IMR-90 (cell line): ENCODE measurements at regions of chr1 and their contacts with region 1.

Region 1: DNA sequence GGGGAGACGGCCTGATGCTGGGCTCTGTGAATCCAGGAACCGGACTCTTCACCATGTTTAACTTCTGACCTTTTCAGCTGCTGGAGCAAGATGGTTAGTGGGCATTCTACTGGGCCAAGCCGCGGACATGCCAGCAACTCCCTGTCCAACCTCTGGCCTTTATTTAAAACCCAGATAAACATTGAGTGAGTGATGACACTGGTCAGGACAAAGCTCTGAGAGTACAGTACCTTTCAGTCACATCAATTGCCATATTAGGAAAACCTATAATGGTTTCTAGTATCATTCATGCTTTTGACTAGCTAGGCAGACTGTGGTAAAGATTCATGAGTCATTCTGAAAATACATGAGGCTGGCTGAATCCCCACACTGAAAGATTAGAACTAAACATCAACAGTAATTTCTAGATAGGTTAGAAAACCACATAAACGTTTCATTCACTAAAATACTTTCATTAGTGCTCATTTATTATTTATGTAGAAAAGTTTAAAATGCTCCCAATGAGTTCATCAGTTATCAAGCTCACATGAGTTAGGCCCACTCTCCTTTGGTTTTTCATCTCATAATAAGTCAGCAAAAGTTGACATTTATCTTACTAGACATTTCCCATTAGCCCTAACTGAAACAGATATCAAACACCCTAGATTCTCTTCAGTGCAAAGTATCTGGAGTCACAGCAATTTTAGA is 7.1 kb upstream of the ACTA1 start:
- DNase-seq: peak; percentile 90
- ATAC-seq: peak; percentile 90
- H3K4me3 ChIP-seq: no peak overlapping the region
- H3K27ac ChIP-seq: peak overlapping the region; percentile 74
- H3K4me1 ChIP-seq: peaks cover 10% of the 10 kb centered on the region
- H3K27me3 ChIP-seq: no peaks in the 10 kb centered on the region; the same call in 1 of the 2 replicates
- CTCF ChIP-seq: 0 out of 2 replicates have a peak, but pooled peaks have one; percentile 1
- POLR2A ChIP-seq: no peak
- RAD21 ChIP-seq: no peak

Region 2: DNA sequence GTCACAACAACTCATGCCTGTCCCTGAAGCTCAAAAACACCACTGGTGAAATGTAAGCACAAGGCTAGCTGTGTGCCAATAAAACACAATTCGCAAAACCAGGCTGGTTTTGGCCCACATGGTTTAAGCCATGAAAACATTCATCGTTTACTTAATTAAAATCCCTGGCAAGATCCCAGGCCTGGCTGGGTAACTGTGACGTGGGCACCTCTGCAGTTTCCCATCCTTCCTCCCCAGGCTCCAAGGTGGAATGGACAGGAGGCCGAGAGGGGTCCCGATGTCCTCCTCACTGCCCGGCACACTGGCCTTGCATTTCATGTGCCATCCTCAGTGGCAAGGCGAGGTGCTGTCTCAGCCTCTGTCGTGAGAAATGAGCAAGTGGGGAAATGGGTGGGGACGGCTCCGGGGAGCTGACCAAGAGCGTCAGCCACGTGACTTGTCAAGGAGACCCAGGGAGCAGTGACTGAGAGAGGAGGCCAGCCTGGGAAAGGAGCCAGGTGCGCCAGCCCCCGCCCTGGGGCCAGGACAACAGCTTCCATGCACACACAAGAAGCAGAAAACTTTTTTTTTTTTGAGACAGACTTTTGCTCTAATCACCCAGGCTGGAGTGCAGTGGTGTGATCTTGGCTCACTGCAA is 323.2 kb before region 1 on chr1:
- CTCF ChIA-PET with region 1: no interaction called
- POLR2A ChIA-PET with region 1: no interaction called
- dilution Hi-C with region 1: no loop called
- in situ Hi-C with region 1: no loop called
- intact Hi-C with region 1: loop called (anchors 10 kb)
- DNase-seq: peak; percentile 49
- ATAC-seq: peak; percentile 24
- H3K4me3 ChIP-seq: no peak overlapping the region
- H3K27ac ChIP-seq: peak overlapping the region; percentile 1; the same call in 1 of the 2 replicates
- H3K4me1 ChIP-seq: peaks cover 16% of the 10 kb centered on the region; the same call in 1 of the 2 replicates
- H3K27me3 ChIP-seq: peaks cover 17% of the 10 kb centered on the region
- CTCF ChIP-seq: no peak
- POLR2A ChIP-seq: no peak
- RAD21 ChIP-seq: no peak

Region 3: GRCh38 chr1:229270547-229271447 is 170.2 kb before region 1 on chr1 and contains the start of gene RAB4A:
- CTCF ChIA-PET with region 1: no interaction called
- POLR2A ChIA-PET with region 1: no interaction called
- dilution Hi-C with region 1: no loop called
- in situ Hi-C with region 1: no loop called
- intact Hi-C with region 1: loop called (anchors 5 kb)
- DNase-seq: peak; percentile 81
- ATAC-seq: peak; percentile 96
- H3K4me3 ChIP-seq: peak within 1 kb of the TSS; percentile 87
- H3K27ac ChIP-seq: peak within 1 kb of the TSS; percentile 54
- H3K4me1 ChIP-seq: peaks cover 10% of the 10 kb centered on the region
- H3K27me3 ChIP-seq: no peaks in the 10 kb centered on the region
- CTCF ChIP-seq: no peak
- POLR2A ChIP-seq: peak; percentile 68; the same call in 1 of the 2 replicates
- RAD21 ChIP-seq: no peak
- total RNA-seq, gene RAB4A: 26.2 and 33.3 TPM in 2 replicates

Region 4: DNA sequence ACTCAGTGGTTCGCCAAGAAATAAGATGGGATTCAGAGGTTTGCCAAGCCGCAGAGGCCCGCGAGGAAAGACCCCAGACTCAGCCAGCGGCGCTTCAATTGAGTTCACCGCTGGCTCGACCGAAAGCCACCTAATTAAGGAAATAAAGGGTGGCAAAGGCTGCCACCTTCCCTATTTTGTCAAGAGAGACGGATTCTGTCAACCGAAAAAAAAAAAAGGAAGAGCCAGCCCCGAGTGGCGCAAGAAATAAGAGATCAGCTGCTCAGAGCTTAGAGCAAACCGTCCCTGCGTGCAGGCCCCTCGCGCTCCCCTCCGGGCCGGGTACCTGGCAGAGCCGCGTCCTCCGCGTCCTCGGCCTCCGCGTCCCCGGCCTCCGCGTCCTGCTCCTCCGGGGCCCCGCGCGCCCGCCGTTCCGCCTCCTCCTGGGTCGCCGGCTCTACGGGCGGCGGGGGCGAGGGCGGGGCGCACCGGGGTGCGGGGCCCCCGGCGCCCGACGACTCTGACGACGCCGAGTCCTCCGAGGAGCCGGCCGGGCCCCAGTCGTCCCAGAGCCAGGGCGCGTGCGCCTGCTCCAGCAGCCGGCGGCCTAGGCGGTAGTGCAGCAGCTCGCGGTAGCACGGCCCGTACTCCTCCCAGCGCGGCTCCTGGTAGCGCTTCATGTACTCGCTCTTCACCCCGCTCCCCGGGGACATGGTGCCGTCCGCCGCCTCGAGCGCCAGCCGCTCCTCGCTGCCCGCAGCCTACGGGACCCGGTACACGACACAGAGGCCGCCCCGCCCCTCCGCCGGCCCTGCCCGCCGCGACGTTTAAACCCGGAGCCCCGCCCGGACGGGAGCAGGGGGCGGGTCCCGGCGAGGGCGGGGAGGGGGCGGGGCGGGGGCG is 99.0 kb before region 1 on chr1:
- CTCF ChIA-PET with region 1: no interaction called
- POLR2A ChIA-PET with region 1: no interaction called
- dilution Hi-C with region 1: no loop called
- in situ Hi-C with region 1: no loop called
- intact Hi-C with region 1: loop called (anchors 1 kb)
- DNase-seq: peak; percentile 57
- ATAC-seq: peak; percentile 92
- H3K4me3 ChIP-seq: peak overlapping the region; percentile 78
- H3K27ac ChIP-seq: peak overlapping the region; percentile 77
- H3K4me1 ChIP-seq: peaks cover 2% of the 10 kb centered on the region; the same call in 1 of the 2 replicates
- H3K27me3 ChIP-seq: peaks cover 5% of the 10 kb centered on the region; the same call in 1 of the 2 replicates
- CTCF ChIP-seq: no peak
- POLR2A ChIP-seq: no peak
- RAD21 ChIP-seq: no peak

Region 5: DNA sequence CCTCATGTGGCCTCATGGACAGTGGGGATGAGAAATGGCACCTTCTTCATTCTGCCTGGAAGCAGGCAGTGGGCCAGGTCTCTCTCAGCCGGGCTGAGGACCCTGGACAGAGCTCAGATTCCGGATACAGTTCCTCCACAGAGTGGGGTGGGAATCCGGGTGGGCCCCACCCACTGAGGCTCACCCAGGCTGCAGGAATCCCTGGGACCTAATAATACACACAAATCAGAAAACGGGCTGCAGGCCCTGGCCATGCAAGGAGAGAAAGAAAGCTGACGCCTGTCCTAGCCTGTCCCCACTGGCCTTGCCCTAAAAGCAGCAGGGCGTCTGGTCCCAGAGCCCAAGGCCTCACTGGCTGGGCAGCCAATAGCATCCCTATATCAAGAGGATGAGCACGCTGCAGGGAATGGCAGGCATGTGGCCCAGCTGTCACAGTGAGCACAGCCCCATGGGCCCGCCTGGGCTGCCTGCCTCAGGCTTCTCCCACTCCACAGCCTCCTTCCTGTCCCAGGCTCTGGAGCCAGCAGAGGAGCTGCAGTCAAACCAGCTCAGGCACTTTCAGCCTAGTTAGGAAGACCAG is 32.4 kb before region 1 on chr1:
- CTCF ChIA-PET with region 1: interaction called, 3 read pairs
- POLR2A ChIA-PET with region 1: interaction called, 11 read pairs
- dilution Hi-C with region 1: no loop called
- in situ Hi-C with region 1: no loop called
- intact Hi-C with region 1: no loop called
- DNase-seq: peak; percentile 7
- ATAC-seq: peak; percentile 60
- H3K4me3 ChIP-seq: no peak overlapping the region
- H3K27ac ChIP-seq: no peak overlapping the region
- H3K4me1 ChIP-seq: peaks cover 7% of the 10 kb centered on the region; the same call in 1 of the 2 replicates
- H3K27me3 ChIP-seq: peaks cover 36% of the 10 kb centered on the region
- CTCF ChIP-seq: no peak
- POLR2A ChIP-seq: no peak
- RAD21 ChIP-seq: no peak